Left lung (tissue), 14 donors: ENCODE measurements at regions of chr3 and their contacts with region 1.

Region 1: GRCh38 chr3:160707187-160707794 is 30.3 kb downstream of the ARL14 start:
- DNase-seq: peak in 2 of 4 donors; percentile 18 to 62
- ATAC-seq: peak; percentile 84
- H3K4me3 ChIP-seq: no peak overlapping the region
- H3K27ac ChIP-seq: no peak overlapping the region
- H3K4me1 ChIP-seq: no peaks in the 10 kb centered on the region
- H3K27me3 ChIP-seq: peaks cover 0 to 17% of the 10 kb centered on the region in 2 donors
- CTCF ChIP-seq: peak; percentile 34 to 47

Region 2: GRCh38 chr3:160801386-160802118 is 94.3 kb after region 1 on chr3:
- intact Hi-C with region 1: no loop called
- DNase-seq: peak in 1 of 4 donors; percentile 65
- ATAC-seq: peak; percentile 92
- H3K4me3 ChIP-seq: no peak overlapping the region
- H3K27ac ChIP-seq: peak overlapping the region; percentile 66 to 78
- H3K4me1 ChIP-seq: peaks cover 11% of the 10 kb centered on the region in 2 donors
- H3K27me3 ChIP-seq: no peaks in the 10 kb centered on the region
- CTCF ChIP-seq: no peak

Region 3: GRCh38 chr3:160941885-160942494 is 234.7 kb after region 1 on chr3:
- intact Hi-C with region 1: loop called in 1 of 2 experiments (anchors 5 kb)
- DNase-seq: peak in 3 of 4 donors; percentile 35 to 72 (median 43)
- ATAC-seq: peak; percentile 90
- H3K4me3 ChIP-seq: no peak overlapping the region
- H3K27ac ChIP-seq: no peak overlapping the region
- H3K4me1 ChIP-seq: no peaks in the 10 kb centered on the region
- H3K27me3 ChIP-seq: no peaks in the 10 kb centered on the region
- CTCF ChIP-seq: peak; percentile 84 to 86